Left colon (tissue), 2 donors: ENCODE measurements at regions of chr2 and their contacts with region 1.

Region 1: DNA sequence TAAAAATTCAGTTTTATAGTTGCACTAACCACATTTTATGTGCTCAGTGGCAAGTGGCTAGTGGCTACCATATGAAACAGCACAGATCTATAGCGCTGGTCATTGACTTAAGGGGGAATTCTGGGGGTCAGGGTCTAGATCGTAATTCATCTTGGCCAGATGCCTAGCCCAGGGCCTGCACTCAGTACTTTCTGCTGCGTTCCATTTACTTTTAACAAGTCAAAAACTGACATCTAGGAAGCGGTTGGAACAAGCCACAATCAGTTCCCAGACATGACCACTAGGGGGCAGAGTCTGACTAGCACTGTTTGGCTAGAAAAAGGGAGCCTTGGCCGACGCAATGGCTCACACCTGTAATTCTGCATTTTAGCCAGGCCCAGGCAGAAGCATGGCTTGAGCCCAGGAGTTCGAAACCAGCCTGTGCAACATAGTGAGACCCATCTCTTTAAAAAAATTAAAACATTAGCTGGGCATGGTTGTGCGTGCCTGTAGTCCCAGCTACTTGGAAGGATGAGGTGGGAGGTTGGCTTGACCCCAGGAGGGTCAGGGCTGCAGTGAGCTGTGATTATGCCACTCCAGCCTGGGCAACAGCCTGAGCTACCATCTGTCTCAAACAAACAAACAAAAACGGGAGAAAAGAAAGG is 9.0 kb upstream of the TMBIM1 start:
- DNase-seq: peak; percentile 86 to 89
- ATAC-seq: peak; percentile 86

Region 2: GRCh38 chr2:218343591-218343990 is 42.3 kb after region 1 on chr2:
- intact Hi-C with region 1: no loop called
- DNase-seq: no peak
- ATAC-seq: no peak

Region 3: GRCh38 chr2:218357236-218358159 is 56.2 kb after region 1 on chr2:
- intact Hi-C with region 1: loop called (anchors 5 to 10 kb)
- DNase-seq: no peak
- ATAC-seq: no peak

Region 4: DNA sequence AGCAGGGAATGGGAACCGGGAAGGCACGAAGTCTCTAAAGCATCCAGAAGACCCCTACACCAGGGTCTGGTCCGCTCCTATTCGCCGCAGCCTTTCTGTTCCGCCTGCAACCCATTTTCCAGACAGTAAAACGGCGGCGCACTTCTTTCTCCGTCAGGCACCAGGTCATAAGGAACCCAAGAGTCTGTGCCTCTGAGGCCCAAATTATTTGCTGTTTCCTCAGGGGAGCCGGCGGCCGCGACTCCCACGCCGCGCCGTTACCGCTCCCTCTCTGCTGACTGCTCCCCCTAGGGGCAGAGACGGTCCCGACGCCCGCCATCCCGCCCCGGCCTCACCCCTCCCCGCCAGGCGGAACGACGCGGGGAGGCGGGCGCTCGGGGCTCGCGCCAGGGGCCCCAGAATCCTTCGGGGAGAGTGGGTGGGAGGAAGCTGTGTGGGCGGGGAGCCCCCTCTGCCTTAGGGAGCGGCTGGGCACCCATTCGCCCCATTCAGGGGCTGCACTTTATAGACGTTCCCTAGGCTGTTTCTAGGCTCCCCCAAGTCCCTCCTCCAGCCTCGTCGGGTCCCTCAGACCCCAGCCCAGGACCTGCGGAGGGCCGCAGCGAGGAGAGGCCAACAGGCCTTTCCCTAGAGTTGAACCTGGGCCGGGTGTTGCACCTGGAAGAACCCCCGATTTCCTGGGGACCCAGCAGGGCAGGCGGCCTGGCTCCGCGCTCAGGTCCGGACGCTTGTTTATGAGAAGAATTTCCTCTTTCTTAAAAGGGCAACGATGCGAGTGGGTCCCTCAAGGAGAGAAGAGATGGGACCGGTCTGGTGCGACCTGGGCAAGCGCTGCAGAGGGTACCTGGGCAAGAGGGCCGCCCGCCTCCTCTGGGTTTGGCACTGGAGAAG is 94.7 kb after region 1 on chr2:
- intact Hi-C with region 1: loop called in 1 of 2 experiments (anchors 5 kb)
- DNase-seq: peak; percentile 93 to 95
- ATAC-seq: peak; percentile 55